Aorta (tissue), 5 donors: ENCODE measurements at regions of chr6 and their contacts with region 1.

Region 1: DNA sequence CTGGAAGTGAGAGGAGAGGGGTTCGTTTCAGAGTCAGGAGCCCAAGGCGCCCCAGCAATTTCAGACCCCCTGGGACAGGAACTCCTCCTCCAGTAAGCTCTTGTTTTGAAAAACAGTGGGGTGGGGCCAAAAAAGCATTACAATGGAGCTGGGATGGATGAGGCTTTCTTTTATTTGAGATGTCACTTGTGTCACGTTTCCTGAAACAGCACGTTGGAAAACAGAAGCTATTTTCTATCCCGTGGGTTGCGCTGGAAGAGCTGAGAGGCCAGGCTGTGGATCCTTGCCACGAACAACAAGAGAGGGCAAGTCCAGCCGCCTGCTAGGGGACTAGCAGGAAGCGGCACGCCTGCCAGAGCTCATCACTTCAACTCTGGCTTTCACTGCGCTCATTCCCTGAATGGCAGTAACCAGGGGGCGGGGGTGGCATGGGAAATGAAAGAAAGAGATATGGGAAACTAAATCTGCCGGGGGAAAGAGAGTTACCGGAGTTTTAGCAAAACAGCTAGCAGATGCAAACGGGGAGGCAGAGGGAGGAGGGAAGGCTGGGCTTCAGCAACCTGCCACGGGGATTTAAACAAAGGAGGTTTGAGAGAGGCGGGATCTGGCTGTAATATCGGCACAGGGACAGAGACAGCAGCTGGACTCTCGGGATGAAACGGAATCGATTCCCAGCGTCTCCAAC is 34.6 kb downstream of the GCNT2 start:
- DNase-seq: peak; percentile 70 to 81
- ATAC-seq: peak; percentile 72
- H3K4me3 ChIP-seq: peak overlapping the region; percentile 24 to 65
- H3K27ac ChIP-seq: peak overlapping the region; percentile 52 to 77
- H3K4me1 ChIP-seq: peaks cover 7 to 19% of the 10 kb centered on the region in 2 donors
- H3K27me3 ChIP-seq: no peaks in the 10 kb centered on the region

Region 2: GRCh38 chr6:10521104-10521808 is 34.5 kb before region 1 on chr6 and contains the start of gene GCNT2:
- intact Hi-C with region 1: loop called in 1 of 2 experiments (anchors 5 kb)
- DNase-seq: no peak
- ATAC-seq: no peak
- H3K4me3 ChIP-seq: peak within 1 kb of the TSS in 1 of 2 donors; percentile 41
- H3K27ac ChIP-seq: peak within 1 kb of the TSS; percentile 57 to 89
- H3K4me1 ChIP-seq: peaks cover 3 to 7% of the 10 kb centered on the region in 2 donors
- H3K27me3 ChIP-seq: no peaks in the 10 kb centered on the region
- total RNA-seq, gene GCNT2: 14.6 to 18.6 TPM

Region 3: GRCh38 chr6:10609995-10610688 is 54.4 kb after region 1 on chr6:
- intact Hi-C with region 1: loop called in 1 of 2 experiments (anchors 10 kb)
- DNase-seq: no peak
- ATAC-seq: no peak
- H3K4me3 ChIP-seq: no peak overlapping the region
- H3K27ac ChIP-seq: peak overlapping the region; percentile 14 to 67
- H3K4me1 ChIP-seq: peaks cover 10 to 15% of the 10 kb centered on the region in 2 donors
- H3K27me3 ChIP-seq: no peaks in the 10 kb centered on the region

Region 4: GRCh38 chr6:10722820-10723566 is 167.2 kb after region 1 on chr6 and contains the start of gene TMEM14C:
- intact Hi-C with region 1: no loop called
- DNase-seq: peak; percentile 99 to 100
- ATAC-seq: peak; percentile 99
- H3K4me3 ChIP-seq: peak within 1 kb of the TSS; percentile 68 to 78
- H3K27ac ChIP-seq: peak within 1 kb of the TSS; percentile 9 to 85
- H3K4me1 ChIP-seq: peaks cover 3 to 5% of the 10 kb centered on the region in 2 donors
- H3K27me3 ChIP-seq: no peaks in the 10 kb centered on the region
- total RNA-seq, gene TMEM14C: 72.8 to 85.3 TPM